Activated naive CD4-positive, alpha-beta T cell treated with anti-CD3 and anti-CD28 coated beads for 36 hours (primary cell): ENCODE measurements at regions of chr17 and their contacts with region 1.

Region 1: DNA sequence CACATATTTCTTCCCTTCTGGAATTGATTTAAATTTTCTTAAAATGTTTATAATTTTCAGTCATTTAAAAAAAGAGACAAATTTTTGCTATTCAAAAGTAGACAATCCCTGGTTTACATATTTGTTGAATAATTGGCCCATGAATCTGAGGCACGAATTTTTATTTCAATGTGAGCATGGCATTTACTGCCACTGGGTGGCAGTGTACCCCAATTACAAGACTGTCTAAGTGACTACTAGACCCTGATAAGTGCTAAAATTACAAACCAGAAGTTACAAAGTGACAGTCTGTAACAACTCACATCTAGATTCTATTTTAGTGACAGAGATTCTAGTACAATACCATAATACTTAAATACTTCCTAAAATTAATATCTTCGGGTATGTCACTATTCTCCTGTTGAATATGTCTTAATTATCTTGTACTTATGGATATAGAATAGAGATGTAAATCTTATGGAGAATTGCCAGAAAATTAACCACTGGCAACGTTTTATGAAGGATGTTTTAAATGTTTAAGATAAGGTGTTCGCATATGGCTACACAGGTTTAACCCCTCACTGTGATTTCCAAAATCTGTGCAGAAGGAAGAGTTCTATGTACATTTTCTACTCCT is 235.8 kb downstream of the MAP2K4 start:
- DNase-seq: peak; percentile 34
- H3K4me3 Mint-ChIP-seq: no peak overlapping the region
- H3K27ac Mint-ChIP-seq: no peak overlapping the region
- H3K4me1 Mint-ChIP-seq: no peaks in the 10 kb centered on the region
- H3K27me3 Mint-ChIP-seq: no peaks in the 10 kb centered on the region

Region 2: GRCh38 chr17:12209632-12210191 is 46.8 kb before region 1 on chr17:
- CTCF ChIA-PET with region 1: no interaction called
- intact Hi-C with region 1: no loop called
- DNase-seq: no peak
- H3K4me3 Mint-ChIP-seq: no peak overlapping the region
- H3K27ac Mint-ChIP-seq: no peak overlapping the region
- H3K4me1 Mint-ChIP-seq: no peaks in the 10 kb centered on the region
- H3K27me3 Mint-ChIP-seq: no peaks in the 10 kb centered on the region

Region 3: DNA sequence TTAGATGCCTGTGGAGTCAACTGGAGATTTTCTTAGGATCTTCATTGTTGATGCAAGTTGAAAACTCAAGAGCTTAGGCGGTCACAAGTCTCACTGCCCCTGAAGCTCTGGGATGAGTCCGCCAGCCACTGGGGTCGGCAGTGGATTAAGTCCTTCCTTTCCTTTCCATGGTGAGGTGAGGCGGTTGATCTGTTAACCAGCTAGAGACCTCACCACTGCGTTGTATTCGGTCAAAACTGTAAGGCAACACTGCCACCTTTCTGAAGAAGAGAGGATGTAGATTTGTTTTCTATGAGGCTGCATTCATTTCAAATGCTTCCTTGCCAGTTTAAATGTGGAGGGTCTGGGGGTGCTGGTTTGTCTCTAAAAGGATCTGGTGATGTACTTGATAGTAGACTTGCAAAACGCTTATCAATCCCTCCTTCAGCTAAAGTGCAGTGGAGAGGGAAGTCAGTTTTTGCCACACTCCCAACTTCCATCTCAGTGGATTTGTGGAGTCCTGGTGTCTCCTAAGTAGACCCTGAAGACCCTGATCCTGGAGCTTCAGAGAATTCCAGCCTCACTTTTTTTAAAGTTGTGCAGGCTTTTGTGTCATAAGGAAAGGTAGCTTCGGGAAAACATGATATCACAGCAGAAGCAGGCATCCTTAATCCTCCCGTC is 410.9 kb after region 1 on chr17:
- CTCF ChIA-PET with region 1: no interaction called
- intact Hi-C with region 1: loop called (anchors 1 kb)
- DNase-seq: no peak
- H3K4me3 Mint-ChIP-seq: no peak overlapping the region
- H3K27ac Mint-ChIP-seq: no peak overlapping the region
- H3K4me1 Mint-ChIP-seq: no peaks in the 10 kb centered on the region
- H3K27me3 Mint-ChIP-seq: peaks cover 41% of the 10 kb centered on the region

Region 4: DNA sequence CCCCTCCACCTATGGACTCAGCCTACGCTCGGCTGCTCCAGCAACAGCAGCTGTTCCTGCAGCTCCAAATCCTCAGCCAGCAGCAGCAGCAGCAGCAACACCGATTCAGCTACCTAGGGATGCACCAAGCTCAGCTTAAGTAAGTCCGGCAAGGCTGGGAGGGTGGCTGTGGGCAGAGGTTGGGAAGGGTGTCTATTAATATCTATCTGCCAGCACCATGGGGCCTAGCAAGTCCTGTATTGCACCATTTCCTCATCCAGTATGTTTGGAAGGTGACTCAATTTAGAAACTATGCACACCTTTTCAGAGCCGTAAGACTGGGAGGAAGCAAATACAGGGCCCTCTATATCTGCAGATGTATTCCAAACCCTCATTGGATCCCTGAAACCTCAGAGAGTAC is 487.8 kb after region 1 on chr17:
- CTCF ChIA-PET with region 1: interaction called, 7 read pairs
- intact Hi-C with region 1: loop called (anchors 1 kb)
- DNase-seq: no peak
- H3K4me3 Mint-ChIP-seq: no peak overlapping the region
- H3K27ac Mint-ChIP-seq: no peak overlapping the region
- H3K4me1 Mint-ChIP-seq: no peaks in the 10 kb centered on the region
- H3K27me3 Mint-ChIP-seq: peaks cover 3% of the 10 kb centered on the region

Region 5: DNA sequence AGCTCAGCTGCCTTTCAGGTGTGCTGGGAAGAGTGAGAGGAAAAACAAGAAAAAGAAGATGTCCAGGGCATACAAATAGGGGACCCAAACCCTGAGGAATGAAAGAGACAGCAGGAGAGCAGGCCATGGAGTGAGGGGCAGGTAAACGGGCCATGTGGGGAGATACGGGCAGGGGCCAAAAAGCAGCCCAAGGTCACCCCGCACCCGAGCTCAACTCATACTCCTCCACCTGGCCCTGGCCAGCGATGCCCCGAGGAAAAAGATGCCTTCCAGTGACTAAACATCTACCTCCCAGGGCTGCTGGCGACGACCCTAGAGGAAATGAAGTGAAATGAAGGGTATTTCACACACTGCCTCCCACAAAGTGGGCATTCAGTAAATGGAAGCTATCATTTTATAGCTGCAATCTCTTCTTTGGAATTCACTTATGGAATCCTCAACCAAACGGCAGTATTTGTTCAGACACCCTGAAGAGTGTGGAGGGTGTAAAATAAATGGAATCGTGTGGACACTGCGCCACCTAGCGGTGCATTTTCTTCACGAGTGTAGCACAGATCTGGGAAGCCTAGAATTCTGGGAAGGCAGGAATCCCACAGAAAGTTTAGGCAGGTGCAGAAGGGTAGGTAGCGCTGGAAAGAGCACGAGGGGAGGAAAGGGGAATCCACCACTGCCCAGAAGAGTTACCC is 746.4 kb after region 1 on chr17:
- CTCF ChIA-PET with region 1: interaction called, 3 read pairs
- intact Hi-C with region 1: loop called (anchors 1 kb)
- DNase-seq: peak; percentile 68
- H3K4me3 Mint-ChIP-seq: no peak overlapping the region
- H3K27ac Mint-ChIP-seq: no peak overlapping the region
- H3K4me1 Mint-ChIP-seq: peaks cover 2% of the 10 kb centered on the region
- H3K27me3 Mint-ChIP-seq: no peaks in the 10 kb centered on the region